ENCODE measurements at regions of chr1 and their contacts with region 1.

Region 1: GRCh38 chr1:197868751-197869489 is 33.5 kb upstream of the C1orf53 start:
- DNase-seq: peak; percentile 59
- ATAC-seq: peak; percentile 99
- H3K4me3 ChIP-seq: no peak overlapping the region
- H3K27ac ChIP-seq: no peak overlapping the region
- H3K4me1 ChIP-seq: no peaks in the 10 kb centered on the region
- H3K27me3 ChIP-seq: no peaks in the 10 kb centered on the region
- CTCF ChIP-seq: peak; percentile 60 to 71 (median 70)
- POLR2A ChIP-seq: no peak
- RAD21 ChIP-seq: peak; percentile 85

Region 2: GRCh38 chr1:197526736-197527371 is 342.1 kb before region 1 on chr1:
- CTCF ChIA-PET with region 1: interaction called, 9 read pairs
- POLR2A ChIA-PET with region 1: no interaction called
- RAD21 ChIA-PET with region 1: no interaction called
- intact Hi-C with region 1: loop called (anchors 1 kb)
- DNase-seq: peak; percentile 10
- ATAC-seq: no peak
- H3K4me3 ChIP-seq: no peak overlapping the region
- H3K27ac ChIP-seq: no peak overlapping the region
- H3K4me1 ChIP-seq: no peaks in the 10 kb centered on the region
- H3K27me3 ChIP-seq: no peaks in the 10 kb centered on the region
- CTCF ChIP-seq: peak; percentile 32 to 50 (median 49); a peak in 3 of 6 replicates
- POLR2A ChIP-seq: no peak
- RAD21 ChIP-seq: peak; percentile 54

Region 3: DNA sequence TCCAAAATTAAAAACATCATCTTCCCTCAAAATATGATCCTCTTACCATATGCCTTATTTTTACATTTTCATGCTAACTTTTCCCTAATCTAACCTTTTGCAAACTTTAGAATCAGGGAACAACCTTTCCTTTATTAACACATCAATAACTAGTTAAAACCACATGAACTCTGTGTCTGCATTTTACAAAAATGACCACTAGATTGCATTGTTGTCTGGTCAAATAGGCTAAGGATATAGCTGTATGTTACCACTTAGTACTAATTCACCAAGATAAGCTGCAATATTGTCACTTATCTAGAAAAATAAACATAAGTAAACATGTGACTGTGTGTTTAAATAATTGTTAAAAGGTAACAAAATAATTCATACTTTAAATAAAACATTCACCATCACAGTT is 176.0 kb before region 1 on chr1:
- CTCF ChIA-PET with region 1: interaction called, 11 read pairs
- POLR2A ChIA-PET with region 1: no interaction called
- RAD21 ChIA-PET with region 1: no interaction called
- intact Hi-C with region 1: loop called (anchors 10 kb)
- DNase-seq: peak; percentile 4
- ATAC-seq: peak; percentile 50; the same call in 1 of the 2 replicates
- H3K4me3 ChIP-seq: no peak overlapping the region
- H3K27ac ChIP-seq: no peak overlapping the region
- H3K4me1 ChIP-seq: peaks cover 0 to 3% of the 10 kb centered on the region in 2 experiments; a peak in 2 of 4 replicates
- H3K27me3 ChIP-seq: no peaks in the 10 kb centered on the region
- CTCF ChIP-seq: peak in 1 of 3 experiments; percentile 41; a peak in 2 of 6 replicates
- POLR2A ChIP-seq: no peak
- RAD21 ChIP-seq: peak; percentile 70

Measured in HCT116 (cell line).